Transverse colon (tissue), 4 donors: ENCODE measurements at regions of chr6 and their contacts with region 1.

Region 1: DNA sequence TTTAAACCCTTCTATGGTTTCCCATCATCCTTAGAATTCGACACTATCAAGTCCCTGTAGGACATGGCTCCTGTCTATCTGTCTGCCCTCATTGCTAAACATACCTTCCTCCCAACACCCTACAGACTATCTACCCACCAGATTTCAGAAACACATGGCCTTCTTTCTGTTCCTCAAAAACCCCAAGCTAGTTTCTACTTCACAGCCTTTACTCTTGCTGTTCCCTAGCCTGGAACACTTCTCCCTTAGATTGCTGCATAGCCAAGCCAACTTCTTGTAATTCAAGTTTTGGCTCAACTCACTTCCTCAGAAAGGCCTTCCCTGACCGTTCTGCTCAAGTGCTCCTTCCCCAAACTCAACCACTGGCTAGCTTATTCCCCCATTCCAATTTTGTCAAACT is 156.2 kb downstream of the BTBD9 start:
- DNase-seq: no peak
- H3K4me3 ChIP-seq: no peak overlapping the region
- H3K27ac ChIP-seq: no peak overlapping the region
- H3K4me1 ChIP-seq: no peaks in the 10 kb centered on the region
- H3K27me3 ChIP-seq: no peaks in the 10 kb centered on the region
- CTCF ChIP-seq: no peak
- EP300 ChIP-seq: no peak
- POLR2A ChIP-seq: no peak

Region 2: DNA sequence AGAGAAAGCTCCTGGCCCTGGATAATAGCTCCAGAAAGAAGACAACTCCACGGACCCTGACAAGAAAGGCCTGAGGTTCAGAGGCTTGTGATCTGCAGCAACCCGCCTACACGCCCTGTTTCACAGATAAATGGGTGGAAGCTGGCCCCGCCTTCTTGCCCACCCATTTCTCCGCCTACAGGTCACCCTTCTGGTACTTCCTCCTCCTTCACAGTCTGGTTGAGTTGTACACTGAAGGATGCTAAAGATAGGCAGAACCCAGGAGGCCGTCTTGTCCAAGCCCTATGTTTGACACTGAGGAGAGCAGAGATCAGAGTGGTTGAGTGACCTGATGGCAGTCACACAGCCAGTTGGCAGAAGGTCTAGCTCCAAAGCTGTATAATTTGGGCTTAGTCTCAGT is 751.6 kb before region 1 on chr6:
- in situ Hi-C with region 1: no loop called
- intact Hi-C with region 1: loop called (anchors 5 kb)
- DNase-seq: peak; percentile 40
- H3K4me3 ChIP-seq: no peak overlapping the region
- H3K27ac ChIP-seq: no peak overlapping the region
- H3K4me1 ChIP-seq: no peaks in the 10 kb centered on the region
- H3K27me3 ChIP-seq: no peaks in the 10 kb centered on the region
- CTCF ChIP-seq: no peak
- EP300 ChIP-seq: no peak
- POLR2A ChIP-seq: no peak

Region 3: DNA sequence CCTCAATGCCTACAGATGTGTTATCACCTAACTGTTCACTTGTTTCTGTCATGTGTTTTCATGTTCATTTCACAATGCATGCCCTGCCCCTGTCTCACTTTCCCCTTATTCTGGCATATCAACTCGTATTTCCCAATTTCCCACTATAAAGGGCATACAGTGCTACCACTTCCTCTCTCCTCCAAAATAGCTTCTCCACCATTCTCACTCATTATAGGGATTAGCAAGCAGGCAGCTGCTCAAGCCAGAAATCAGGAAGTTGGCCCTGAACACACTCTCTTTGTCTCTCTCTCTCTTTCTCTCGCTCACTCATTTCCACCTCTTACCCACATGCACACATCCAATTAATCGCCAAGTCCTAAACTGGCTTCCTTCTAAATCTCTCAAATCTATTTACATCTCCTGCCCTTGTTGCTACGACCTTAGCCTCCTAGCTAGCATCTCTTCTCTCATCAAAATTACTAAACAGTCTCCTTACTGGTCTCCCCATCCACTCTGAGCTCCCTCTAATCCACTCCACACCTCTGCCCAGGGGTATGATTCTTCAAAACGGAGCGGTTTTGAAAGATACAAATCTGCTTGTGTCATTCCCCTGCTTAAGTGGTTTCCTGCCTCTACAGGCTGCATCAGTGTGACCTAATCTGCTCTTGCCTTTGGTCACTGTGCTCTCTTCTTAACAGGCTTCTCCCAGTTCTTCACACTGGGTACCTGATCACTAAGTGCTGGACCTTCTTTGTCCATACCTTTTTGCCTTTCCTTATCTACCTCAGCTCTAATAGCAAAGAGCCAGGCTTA is 40.0 kb before region 1 on chr6:
- in situ Hi-C with region 1: no loop called
- intact Hi-C with region 1: no loop called
- DNase-seq: no peak
- H3K4me3 ChIP-seq: no peak overlapping the region
- H3K27ac ChIP-seq: no peak overlapping the region
- H3K4me1 ChIP-seq: no peaks in the 10 kb centered on the region
- H3K27me3 ChIP-seq: no peaks in the 10 kb centered on the region
- CTCF ChIP-seq: no peak
- EP300 ChIP-seq: no peak
- POLR2A ChIP-seq: no peak